IMR-90 (cell line): ENCODE measurements at regions of chr3 and their contacts with region 1.

Region 1: GRCh38 chr3:51538459-51539290 is at the start of gene RAD54L2:
- DNase-seq: peak; percentile 79
- ATAC-seq: peak; percentile 90
- H3K4me3 ChIP-seq: peak within 1 kb of the TSS; percentile 63
- H3K27ac ChIP-seq: peak within 1 kb of the TSS; percentile 74
- H3K4me1 ChIP-seq: peaks cover 6% of the 10 kb centered on the region; the same call in 1 of the 2 replicates
- H3K27me3 ChIP-seq: no peaks in the 10 kb centered on the region
- CTCF ChIP-seq: peak; percentile 44
- POLR2A ChIP-seq: peak; percentile 65
- RAD21 ChIP-seq: peak; percentile 6; the same call in 1 of the 2 replicates
- total RNA-seq, gene RAD54L2: 22.2 and 24.2 TPM in 2 replicates

Region 2: GRCh38 chr3:50534681-50535330 is 1003.9 kb before region 1 on chr3:
- CTCF ChIA-PET with region 1: no interaction called
- POLR2A ChIA-PET with region 1: interaction called, 14 read pairs
- dilution Hi-C with region 1: no loop called
- in situ Hi-C with region 1: no loop called
- intact Hi-C with region 1: no loop called
- DNase-seq: peak; percentile 23
- ATAC-seq: no peak
- H3K4me3 ChIP-seq: no peak overlapping the region
- H3K27ac ChIP-seq: no peak overlapping the region
- H3K4me1 ChIP-seq: no peaks in the 10 kb centered on the region
- H3K27me3 ChIP-seq: peaks cover 85% of the 10 kb centered on the region
- CTCF ChIP-seq: no peak
- POLR2A ChIP-seq: no peak
- RAD21 ChIP-seq: no peak

Region 3: GRCh38 chr3:51622868-51623267 is 84.2 kb after region 1 on chr3:
- CTCF ChIA-PET with region 1: no interaction called
- POLR2A ChIA-PET with region 1: no interaction called
- dilution Hi-C with region 1: no loop called
- in situ Hi-C with region 1: no loop called
- intact Hi-C with region 1: loop called (anchors 5 kb)
- DNase-seq: peak; percentile 72
- ATAC-seq: no peak
- H3K4me3 ChIP-seq: no peak overlapping the region
- H3K27ac ChIP-seq: no peak overlapping the region
- H3K4me1 ChIP-seq: peaks cover 20% of the 10 kb centered on the region
- H3K27me3 ChIP-seq: no peaks in the 10 kb centered on the region
- CTCF ChIP-seq: no peak
- POLR2A ChIP-seq: no peak
- RAD21 ChIP-seq: no peak

Region 4: GRCh38 chr3:51670823-51671733 is 132.4 kb after region 1 on chr3 and contains the start of gene TEX264:
- CTCF ChIA-PET with region 1: interaction called, 3 read pairs
- POLR2A ChIA-PET with region 1: no interaction called
- dilution Hi-C with region 1: no loop called
- in situ Hi-C with region 1: no loop called
- intact Hi-C with region 1: loop called (anchors 1 kb)
- DNase-seq: peak; percentile 71
- ATAC-seq: peak; percentile 82
- H3K4me3 ChIP-seq: peak within 1 kb of the TSS; percentile 87
- H3K27ac ChIP-seq: peak within 1 kb of the TSS; percentile 79
- H3K4me1 ChIP-seq: peaks cover 12% of the 10 kb centered on the region
- H3K27me3 ChIP-seq: no peaks in the 10 kb centered on the region
- CTCF ChIP-seq: no peak
- POLR2A ChIP-seq: peak; percentile 55; the same call in 1 of the 2 replicates
- RAD21 ChIP-seq: no peak
- total RNA-seq, gene TEX264: 26.9 and 30.3 TPM in 2 replicates